Ascending aorta (tissue), 2 donors: ENCODE measurements at regions of chr1 and their contacts with region 1.

Region 1: GRCh38 chr1:223683586-223684487 is 18.3 kb upstream of the CAPN8 start:
- DNase-seq: no peak
- H3K4me3 ChIP-seq: no peak overlapping the region
- H3K27ac ChIP-seq: no peak overlapping the region
- H3K4me1 ChIP-seq: no peaks in the 10 kb centered on the region
- H3K27me3 ChIP-seq: peaks cover 5% of the 10 kb centered on the region
- CTCF ChIP-seq: peak in 2 of 3 experiments; percentile 41 to 56

Region 2: DNA sequence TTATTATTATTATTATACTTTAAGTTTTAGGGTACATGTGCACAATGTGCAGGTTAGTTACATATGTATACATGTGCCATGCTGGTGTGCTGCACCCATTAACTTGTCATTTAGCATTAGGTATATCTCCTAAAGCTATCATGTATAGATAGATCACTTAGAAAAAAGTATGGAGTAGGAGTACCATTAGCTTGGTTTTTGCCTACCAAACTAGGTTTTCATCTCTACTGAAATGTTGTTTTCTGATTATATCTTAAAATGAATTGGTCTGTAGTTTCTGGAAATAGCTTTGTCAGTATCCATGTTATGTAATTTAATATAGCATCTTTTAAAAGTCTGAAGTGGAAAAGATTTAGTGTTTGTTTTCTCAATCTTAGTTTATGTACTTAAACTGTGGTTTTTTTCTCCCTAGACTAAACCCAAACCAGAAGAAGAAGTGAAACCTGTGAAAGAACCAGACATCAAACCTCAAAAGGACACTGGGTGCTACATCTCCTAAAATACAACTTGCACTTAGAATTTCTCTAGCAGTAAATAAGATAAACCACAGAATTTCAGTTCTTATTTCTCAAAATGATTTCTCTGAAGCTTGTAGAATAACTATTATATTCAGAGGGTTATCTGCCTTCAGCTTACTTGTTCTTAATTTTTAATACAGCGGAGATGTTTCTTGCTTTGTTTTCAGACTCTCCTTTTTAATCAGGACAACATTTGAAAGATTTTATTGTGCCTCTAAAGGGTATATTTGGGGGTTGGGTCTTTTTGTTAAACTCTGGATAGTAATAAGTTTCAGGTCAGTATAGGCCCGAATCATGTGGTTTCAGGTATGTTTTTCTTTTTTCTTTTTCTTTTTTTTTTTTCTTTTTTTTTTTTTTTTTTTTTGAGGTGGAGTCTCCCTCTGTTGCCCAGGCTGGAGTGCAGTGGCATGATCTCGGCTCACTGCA is 951.3 kb before region 1 on chr1:
- intact Hi-C with region 1: loop called (anchors 10 kb)
- DNase-seq: no peak
- H3K4me3 ChIP-seq: no peak overlapping the region
- H3K27ac ChIP-seq: no peak overlapping the region
- H3K4me1 ChIP-seq: no peaks in the 10 kb centered on the region
- H3K27me3 ChIP-seq: no peaks in the 10 kb centered on the region
- CTCF ChIP-seq: no peak

Region 3: DNA sequence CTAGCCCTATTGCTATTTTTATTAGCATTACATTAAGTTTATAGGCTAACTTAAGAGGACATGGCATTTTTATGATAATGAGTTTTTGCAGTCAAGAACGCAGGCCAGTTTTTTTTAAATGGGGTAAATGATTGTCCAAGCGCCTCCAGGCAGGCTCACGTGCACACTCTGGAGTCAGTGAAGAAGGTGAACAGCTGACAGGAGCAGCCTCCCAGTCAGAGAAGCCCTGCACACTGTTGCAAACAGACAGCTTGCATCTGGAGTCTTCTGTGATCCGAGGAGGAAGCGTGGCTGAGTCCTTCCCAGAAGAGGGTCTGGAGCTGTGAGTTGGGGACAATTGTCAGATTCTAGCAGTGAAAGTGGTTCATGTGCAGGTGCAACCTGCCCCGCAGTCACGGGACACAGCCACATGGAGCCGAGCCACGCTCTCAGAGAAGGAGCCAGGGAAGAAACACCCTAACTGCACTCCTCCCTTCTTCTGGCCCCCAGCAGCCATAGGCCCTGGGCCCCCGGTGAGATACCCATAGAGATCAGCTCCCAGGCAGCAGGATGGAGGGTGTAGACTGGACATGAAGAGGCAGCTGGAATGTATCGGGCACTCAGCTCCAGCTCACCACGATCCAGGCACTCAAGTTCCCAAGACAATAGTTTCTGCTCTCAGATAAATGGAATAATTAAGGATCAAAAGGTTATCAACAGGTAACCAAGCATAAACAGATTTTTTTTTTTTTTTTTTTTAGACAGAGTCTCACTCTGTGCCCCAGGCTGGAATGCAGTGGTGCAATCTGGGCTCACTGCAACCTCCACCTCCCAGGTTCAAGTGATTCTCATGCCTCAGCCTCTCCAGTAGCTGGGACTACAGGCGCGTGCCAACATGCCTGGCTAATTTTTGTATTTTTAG is 54.9 kb after region 1 on chr1:
- intact Hi-C with region 1: no loop called
- DNase-seq: no peak
- H3K4me3 ChIP-seq: no peak overlapping the region
- H3K27ac ChIP-seq: peak overlapping the region; percentile 76 to 80
- H3K4me1 ChIP-seq: peaks cover 9 to 36% of the 10 kb centered on the region in 2 donors
- H3K27me3 ChIP-seq: no peaks in the 10 kb centered on the region
- CTCF ChIP-seq: no peak